ENCODE measurements at regions of chr1 and their contacts with region 1.

Region 1: DNA sequence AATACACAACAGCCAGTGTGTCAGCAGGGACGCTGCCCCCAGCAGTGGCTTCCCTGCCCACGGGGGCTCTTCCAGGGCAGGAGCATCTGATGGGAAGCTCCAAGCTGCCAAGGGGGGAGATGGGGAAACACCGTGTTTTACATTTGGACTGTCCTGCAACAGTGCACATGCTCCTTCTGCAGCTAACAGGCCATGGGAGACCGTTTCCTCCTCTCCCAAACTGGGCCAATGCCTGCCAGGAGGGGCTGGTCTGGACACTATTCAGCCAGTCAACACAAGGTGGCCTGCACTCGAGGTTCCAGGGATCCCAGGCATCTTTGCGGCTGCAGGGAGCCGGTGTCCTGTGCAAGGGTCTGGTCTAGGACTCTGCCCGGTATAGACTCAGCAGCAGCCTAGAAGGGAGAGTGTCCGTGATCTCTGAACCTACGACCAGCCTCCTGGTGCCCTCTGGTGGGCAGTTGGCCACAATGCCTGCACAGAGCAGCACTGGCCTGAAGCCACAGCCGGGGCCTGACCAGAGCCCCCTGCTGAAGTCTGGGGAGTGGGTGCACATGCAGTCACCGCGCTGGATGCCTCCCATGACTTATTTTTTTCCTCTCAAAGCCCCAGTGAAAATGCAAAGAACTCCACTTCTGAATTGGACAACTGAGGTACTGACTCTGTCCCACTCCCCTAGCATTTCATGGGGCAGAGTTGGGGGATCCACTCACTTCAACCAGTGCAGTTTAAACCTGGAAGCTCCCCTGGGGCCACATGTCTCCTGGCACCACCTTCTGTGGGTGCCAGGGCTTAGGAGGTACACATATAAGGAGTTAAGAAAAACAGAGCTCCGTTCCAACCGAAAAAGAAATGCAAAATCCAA is 33.3 kb downstream of the RCC2 start:
- DNase-seq: peak; percentile 62 to 70
- ATAC-seq: peak; percentile 83 to 91
- H3K4me3 ChIP-seq: no peak overlapping the region
- H3K27ac ChIP-seq: peak overlapping the region in 1 of 2 experiments; percentile 69; a peak in 2 of 6 replicates
- H3K4me1 ChIP-seq: no peaks in the 10 kb centered on the region
- CTCF ChIP-seq: peak; percentile 63
- EP300 ChIP-seq: no peak
- POLR2A ChIP-seq: no peak
- RAD21 ChIP-seq: peak; percentile 74

Region 2: GRCh38 chr1:17059739-17060460 is 346.2 kb before region 1 on chr1:
- CTCF ChIA-PET with region 1: interaction called, 107 read pairs
- POLR2A ChIA-PET with region 1: interaction called, 7 read pairs
- DNase-seq: peak; percentile 72 to 73
- ATAC-seq: peak; percentile 99
- H3K4me3 ChIP-seq: no peak overlapping the region
- H3K27ac ChIP-seq: peak overlapping the region in 1 of 2 experiments; percentile 14; a peak in 1 of 6 replicates
- H3K4me1 ChIP-seq: no peaks in the 10 kb centered on the region
- CTCF ChIP-seq: peak; percentile 74
- EP300 ChIP-seq: no peak
- POLR2A ChIP-seq: no peak
- RAD21 ChIP-seq: peak; percentile 88 to 91

Region 3: GRCh38 chr1:17119076-17119772 is 286.9 kb before region 1 on chr1 and contains the start of gene PADI2:
- CTCF ChIA-PET with region 1: interaction called, 47 read pairs
- POLR2A ChIA-PET with region 1: no interaction called
- DNase-seq: peak; percentile 43 to 77
- ATAC-seq: peak; percentile 94 to 95
- H3K4me3 ChIP-seq: peak within 1 kb of the TSS; percentile 52
- H3K27ac ChIP-seq: peak within 1 kb of the TSS; percentile 50 to 76; a peak in 4 of 6 replicates
- H3K4me1 ChIP-seq: peaks cover 22% of the 10 kb centered on the region
- CTCF ChIP-seq: no peak
- EP300 ChIP-seq: no peak
- POLR2A ChIP-seq: peak; percentile 32
- RAD21 ChIP-seq: no peak
- polyA plus RNA-seq, gene PADI2: 1.3 and 1.6 TPM in 2 replicates

Region 4: GRCh38 chr1:17370618-17371017 is 35.5 kb before region 1 on chr1:
- CTCF ChIA-PET with region 1: interaction called, 11 read pairs
- POLR2A ChIA-PET with region 1: no interaction called
- DNase-seq: peak; percentile 42 to 64
- ATAC-seq: peak; percentile 76 to 80; a peak in 5 of 6 replicates
- H3K4me3 ChIP-seq: no peak overlapping the region
- H3K27ac ChIP-seq: no peak overlapping the region
- H3K4me1 ChIP-seq: no peaks in the 10 kb centered on the region; the same call in 2 of the 3 replicates
- CTCF ChIP-seq: peak; percentile 22; the same call in 1 of the 3 replicates
- EP300 ChIP-seq: no peak
- POLR2A ChIP-seq: no peak
- RAD21 ChIP-seq: peak in 1 of 2 experiments; percentile 52; a peak in 3 of 5 replicates